ENCODE measurements at regions of chr17 and their contacts with region 1.

Region 1: DNA sequence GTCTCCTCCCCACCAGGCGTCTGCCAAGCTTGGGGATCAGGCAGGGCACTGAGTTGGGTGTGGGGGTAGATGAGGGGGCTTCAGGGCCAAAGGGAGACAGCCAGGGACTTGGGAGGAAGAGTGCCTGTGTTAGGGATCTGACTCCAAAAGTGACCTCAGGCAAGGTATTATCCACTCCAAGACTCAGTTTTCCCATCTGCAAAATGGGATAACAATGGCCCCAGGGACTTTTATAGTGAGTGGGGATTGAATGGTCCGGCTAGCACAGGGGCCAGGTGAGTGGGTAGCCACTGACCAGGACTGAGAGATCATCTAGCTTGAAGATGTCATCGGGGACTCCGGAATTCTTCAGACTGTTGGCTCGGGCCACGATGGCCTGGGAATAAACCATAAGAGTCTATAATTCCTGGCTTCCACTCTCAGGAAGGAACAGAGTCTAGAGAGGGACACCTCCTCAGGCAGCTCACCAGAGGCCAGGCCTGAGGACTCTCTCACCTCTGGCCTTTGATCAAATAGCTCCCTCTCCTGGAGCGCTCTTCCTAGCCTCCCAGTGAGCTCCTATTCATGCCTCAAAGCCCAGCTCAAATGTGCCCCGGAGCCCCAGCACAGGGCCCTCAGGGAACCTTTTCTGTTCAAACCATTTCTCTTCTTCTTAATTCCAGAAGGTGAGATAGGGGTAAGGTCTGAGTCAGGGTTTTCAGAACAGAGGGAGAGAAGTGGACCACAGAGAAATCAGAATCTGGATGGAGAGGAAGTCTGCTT is 3.5 kb downstream of the FLII start:
- DNase-seq: no peak

Region 2: GRCh38 chr17:18213666-18214270 is 41.3 kb before region 1 on chr17:
- intact Hi-C with region 1: no loop called
- DNase-seq: no peak

Region 3: GRCh38 chr17:18225567-18226283 is 29.3 kb before region 1 on chr17 and contains the start of gene LLGL1:
- intact Hi-C with region 1: loop called in 1 of 2 experiments (anchors 1 kb)
- DNase-seq: no peak
- total RNA-seq, gene LLGL1: 13.9 to 16.2 TPM

Measured in posterior vena cava (tissue), 2 donors.